Caco-2 (cell line): ENCODE measurements at regions of chr9 and their contacts with region 1.

Region 1: GRCh38 chr9:98998441-98999151 is 54.9 kb downstream of the COL15A1 start:
- DNase-seq: peak; percentile 76 to 79
- H3K4me3 ChIP-seq: no peak overlapping the region
- H3K4me3 Mint-ChIP-seq: no peak overlapping the region
- H3K27ac Mint-ChIP-seq: no peak overlapping the region
- H3K4me1 ChIP-seq: peaks cover 3% of the 10 kb centered on the region; the same call in 1 of the 2 replicates
- H3K4me1 Mint-ChIP-seq: no peaks in the 10 kb centered on the region
- H3K27me3 ChIP-seq: no peaks in the 10 kb centered on the region
- H3K27me3 Mint-ChIP-seq: peaks cover 17% of the 10 kb centered on the region
- CTCF ChIP-seq: peak; percentile 85 to 86

Region 2: DNA sequence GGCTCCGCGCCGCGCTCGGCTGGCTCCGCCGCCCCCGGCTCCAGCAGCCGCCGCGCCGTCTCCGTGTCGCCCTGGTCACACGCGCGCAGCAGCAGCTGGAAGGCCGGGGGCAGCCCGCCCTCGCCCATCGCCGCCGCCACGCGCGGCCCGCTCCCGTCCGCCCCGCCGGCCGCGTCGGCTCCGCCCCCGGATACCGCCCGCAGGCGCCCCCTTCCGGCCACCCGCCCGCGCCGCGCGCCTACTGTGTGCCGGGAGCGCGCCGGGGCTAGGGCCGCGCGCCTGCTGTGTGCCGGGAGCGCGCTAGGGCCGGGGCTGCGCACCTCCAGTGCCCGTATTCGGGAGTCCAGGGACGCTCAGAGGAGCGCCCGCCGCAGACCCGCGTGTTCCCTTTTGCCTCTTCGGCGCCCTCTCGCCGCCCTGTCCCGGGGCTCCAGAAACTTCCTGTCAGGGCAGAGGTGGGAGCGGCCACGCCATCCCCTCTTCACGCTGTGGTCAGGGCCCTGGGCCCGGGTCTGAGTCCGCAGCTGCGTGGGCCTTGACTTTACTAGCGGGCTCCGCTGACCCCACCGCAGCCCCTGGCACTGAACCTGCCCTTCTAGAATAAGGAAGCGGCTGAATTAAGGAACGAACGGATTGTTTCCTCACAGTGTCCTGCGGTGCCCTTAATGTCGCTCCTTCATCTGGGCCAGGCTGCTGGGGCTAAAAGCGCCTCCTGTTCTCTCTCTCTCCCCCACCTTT is 202.1 kb before region 1 on chr9 and contains the start of gene ANKS6:
- CTCF ChIA-PET with region 1: no interaction called
- POLR2A ChIA-PET with region 1: no interaction called
- intact Hi-C with region 1: no loop called
- DNase-seq: peak; percentile 77 to 93
- H3K4me3 ChIP-seq: peak within 1 kb of the TSS; percentile 71
- H3K4me3 Mint-ChIP-seq: peak within 1 kb of the TSS; percentile 73
- H3K27ac Mint-ChIP-seq: no peak within 1 kb of the TSS
- H3K4me1 ChIP-seq: peaks cover 17% of the 10 kb centered on the region
- H3K4me1 Mint-ChIP-seq: peaks cover 22% of the 10 kb centered on the region
- H3K27me3 ChIP-seq: no peaks in the 10 kb centered on the region
- H3K27me3 Mint-ChIP-seq: no peaks in the 10 kb centered on the region
- CTCF ChIP-seq: peak; percentile 25 to 49
- total RNA-seq, gene ANKS6: 21.1 and 27.8 TPM in 2 replicates

Region 3: GRCh38 chr9:98848450-98849149 is 150.0 kb before region 1 on chr9:
- CTCF ChIA-PET with region 1: interaction called, 12 read pairs
- POLR2A ChIA-PET with region 1: interaction called, 3 read pairs
- intact Hi-C with region 1: loop called (anchors 1 kb)
- DNase-seq: peak; percentile 88
- H3K4me3 ChIP-seq: no peak overlapping the region
- H3K4me3 Mint-ChIP-seq: peak overlapping the region; percentile 41
- H3K27ac Mint-ChIP-seq: no peak overlapping the region
- H3K4me1 ChIP-seq: peaks cover 14% of the 10 kb centered on the region
- H3K4me1 Mint-ChIP-seq: peaks cover 23% of the 10 kb centered on the region
- H3K27me3 ChIP-seq: no peaks in the 10 kb centered on the region
- H3K27me3 Mint-ChIP-seq: no peaks in the 10 kb centered on the region
- CTCF ChIP-seq: peak; percentile 92 to 94

Region 4: DNA sequence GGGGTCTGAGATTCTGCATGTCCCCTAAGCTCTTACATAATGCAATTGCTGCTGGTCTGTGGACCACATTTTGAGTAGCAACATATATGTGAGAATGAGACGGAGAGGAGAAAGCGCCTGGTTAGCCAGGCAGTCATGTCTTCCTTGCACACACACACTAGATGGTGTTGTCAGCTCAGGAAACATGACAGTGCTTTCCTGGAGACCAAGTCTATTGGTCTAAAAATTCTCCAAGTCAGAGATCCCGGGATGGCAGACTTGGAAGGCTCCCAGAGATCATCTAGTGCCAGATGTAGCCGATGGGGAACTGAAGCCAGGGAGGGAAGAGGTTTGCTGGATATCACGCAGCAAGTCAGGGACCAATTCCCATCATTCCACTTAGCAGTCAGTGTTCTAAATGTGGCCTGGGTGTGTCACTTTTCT is 137.7 kb before region 1 on chr9:
- CTCF ChIA-PET with region 1: no interaction called
- POLR2A ChIA-PET with region 1: no interaction called
- intact Hi-C with region 1: loop called (anchors 2 kb)
- DNase-seq: peak in 1 of 2 experiments; percentile 7
- H3K4me3 ChIP-seq: no peak overlapping the region
- H3K4me3 Mint-ChIP-seq: no peak overlapping the region
- H3K27ac Mint-ChIP-seq: no peak overlapping the region
- H3K4me1 ChIP-seq: no peaks in the 10 kb centered on the region
- H3K4me1 Mint-ChIP-seq: no peaks in the 10 kb centered on the region
- H3K27me3 ChIP-seq: no peaks in the 10 kb centered on the region
- H3K27me3 Mint-ChIP-seq: peaks cover 17% of the 10 kb centered on the region
- CTCF ChIP-seq: no peak

Region 5: GRCh38 chr9:98974994-98975712 is 23.4 kb before region 1 on chr9:
- CTCF ChIA-PET with region 1: interaction called, 3 read pairs
- POLR2A ChIA-PET with region 1: interaction called, 3 read pairs
- intact Hi-C with region 1: loop called (anchors 1 kb)
- DNase-seq: peak; percentile 80 to 89
- H3K4me3 ChIP-seq: no peak overlapping the region
- H3K4me3 Mint-ChIP-seq: no peak overlapping the region
- H3K27ac Mint-ChIP-seq: no peak overlapping the region
- H3K4me1 ChIP-seq: no peaks in the 10 kb centered on the region
- H3K4me1 Mint-ChIP-seq: no peaks in the 10 kb centered on the region
- H3K27me3 ChIP-seq: peaks cover 2% of the 10 kb centered on the region; the same call in 1 of the 2 replicates
- H3K27me3 Mint-ChIP-seq: peaks cover 17% of the 10 kb centered on the region
- CTCF ChIP-seq: peak; percentile 97 to 98